CD8-positive, alpha-beta memory T cell (primary cell): ENCODE measurements at regions of chr1 and their contacts with region 1.

Region 1: GRCh38 chr1:11967028-11967547 is 13.2 kb upstream of the MFN2 start:
- DNase-seq: no peak
- H3K4me3 ChIP-seq: no peak overlapping the region
- H3K4me3 Mint-ChIP-seq: no peak overlapping the region
- H3K27ac ChIP-seq: no peak overlapping the region
- H3K27ac Mint-ChIP-seq: no peak overlapping the region
- H3K4me1 ChIP-seq: no peaks in the 10 kb centered on the region
- H3K4me1 Mint-ChIP-seq: no peaks in the 10 kb centered on the region
- H3K27me3 ChIP-seq: no peaks in the 10 kb centered on the region
- H3K27me3 Mint-ChIP-seq: no peaks in the 10 kb centered on the region

Region 2: DNA sequence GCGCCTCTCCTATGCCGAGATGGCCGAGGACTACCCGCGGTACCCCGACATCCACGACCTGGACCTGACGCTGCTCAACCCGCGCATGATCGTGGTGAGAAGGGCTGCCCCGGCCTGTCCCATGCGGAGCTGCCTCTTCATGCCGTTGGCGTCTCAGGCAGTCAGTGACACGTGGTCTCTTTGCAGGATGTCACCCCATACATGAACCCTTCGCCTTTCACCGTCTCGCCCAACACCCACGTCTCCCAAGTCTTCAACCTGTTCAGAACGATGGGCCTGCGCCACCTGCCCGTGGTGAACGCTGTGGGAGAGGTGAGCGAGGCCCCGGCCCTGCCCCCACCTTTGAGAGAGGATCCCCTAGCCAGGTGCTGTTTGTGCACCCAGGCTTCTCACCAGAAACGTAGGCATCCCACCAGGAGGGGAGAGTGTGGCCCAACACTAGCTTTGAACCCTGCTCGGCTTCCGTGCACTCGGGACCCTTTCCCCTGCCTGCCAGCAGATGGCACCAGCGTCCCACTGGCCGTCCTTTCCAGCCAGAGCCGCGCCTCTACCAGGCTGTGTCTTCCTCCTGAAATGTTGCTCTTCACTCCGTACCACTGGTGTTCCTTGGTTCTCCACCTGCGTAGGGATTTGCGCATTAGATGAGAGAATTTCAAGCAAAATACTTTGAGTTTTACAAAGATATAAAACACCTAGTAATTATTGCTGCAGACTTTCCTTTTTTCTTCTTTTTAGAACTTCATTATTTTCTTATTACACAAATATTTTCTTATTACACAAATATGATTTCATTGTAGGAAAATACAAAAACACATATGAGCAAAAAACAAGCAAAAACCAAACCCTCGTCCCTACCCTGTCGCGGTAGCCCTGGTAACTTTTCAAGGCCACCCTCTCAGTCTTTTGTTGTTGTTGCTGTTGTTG is 128.5 kb before region 1 on chr1:
- CTCF ChIA-PET with region 1: interaction called, 10 read pairs
- POLR2A ChIA-PET with region 1: no interaction called
- DNase-seq: peak; percentile 56 to 81 (median 57)
- H3K4me3 ChIP-seq: no peak overlapping the region
- H3K4me3 Mint-ChIP-seq: no peak overlapping the region
- H3K27ac ChIP-seq: no peak overlapping the region
- H3K27ac Mint-ChIP-seq: peak overlapping the region in 1 of 8 donors; percentile 8
- H3K4me1 ChIP-seq: no peaks in the 10 kb centered on the region
- H3K4me1 Mint-ChIP-seq: peaks cover 5 to 6% (median 6%) of the 10 kb centered on the region in 3 donors
- H3K27me3 ChIP-seq: no peaks in the 10 kb centered on the region
- H3K27me3 Mint-ChIP-seq: no peaks in the 10 kb centered on the region